WTC11 (cell line): ENCODE measurements at regions of chr11 and their contacts with region 1.

Region 1: GRCh38 chr11:125239585-125240560 is 75.3 kb downstream of the PKNOX2 start:
- DNase-seq: peak; percentile 57
- ATAC-seq: peak; percentile 71
- H3K4me3 Mint-ChIP-seq: peak overlapping the region; percentile 28
- H3K27ac Mint-ChIP-seq: 0 out of 2 replicates have a peak overlapping the region, but pooled peaks have one; percentile 5
- H3K4me1 Mint-ChIP-seq: peaks cover 43% of the 10 kb centered on the region
- H3K27me3 Mint-ChIP-seq: no peaks in the 10 kb centered on the region; the same call in 1 of the 2 replicates
- CTCF ChIP-seq: no peak

Region 2: DNA sequence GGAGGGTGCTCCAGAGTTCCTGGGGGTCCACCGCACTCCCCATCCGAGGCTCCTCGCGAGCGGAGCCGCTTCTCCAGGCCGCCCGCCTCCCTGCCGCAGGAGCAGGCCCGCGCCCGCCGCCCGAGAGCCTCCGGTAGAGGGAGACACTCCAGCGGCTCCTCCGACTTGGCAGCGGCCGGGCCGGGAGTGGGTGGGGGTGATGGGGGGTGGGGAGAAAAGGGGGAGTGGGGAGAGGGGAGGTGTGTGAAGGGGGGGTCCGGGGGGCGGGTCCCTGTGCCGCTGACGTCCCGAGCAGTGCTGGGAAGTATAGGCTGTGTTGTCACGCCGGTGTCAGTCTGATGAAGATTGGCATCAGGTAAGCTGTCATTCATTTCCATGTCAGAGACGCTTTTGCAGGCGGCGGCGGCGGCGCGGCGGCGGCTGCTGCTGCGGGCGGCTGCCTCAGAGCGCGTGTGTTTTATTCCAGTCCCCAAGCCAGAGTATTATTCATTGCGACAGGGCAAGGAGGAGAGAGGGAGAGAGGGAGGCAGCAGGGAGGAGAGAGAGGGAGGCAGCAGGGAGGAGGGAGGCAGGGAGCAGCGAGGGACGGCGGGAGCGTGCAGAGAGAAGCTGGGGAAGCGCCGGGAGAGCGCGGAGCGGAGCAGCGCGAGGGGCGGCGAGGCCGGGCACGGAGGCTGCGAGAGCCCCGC is 75.3 kb before region 1 on chr11 and contains the start of gene PKNOX2:
- CTCF ChIA-PET with region 1: interaction called, 10 read pairs
- POLR2A ChIA-PET with region 1: interaction called, 3 read pairs
- DNase-seq: peak; percentile 91
- ATAC-seq: peak; percentile 36
- H3K4me3 Mint-ChIP-seq: peak within 1 kb of the TSS; percentile 84
- H3K27ac Mint-ChIP-seq: peak within 1 kb of the TSS; percentile 95
- H3K4me1 Mint-ChIP-seq: peaks cover 69% of the 10 kb centered on the region
- H3K27me3 Mint-ChIP-seq: peaks cover 58% of the 10 kb centered on the region
- CTCF ChIP-seq: no peak
- total RNA-seq, gene PKNOX2: 1.9 to 3.7 TPM (median 2.3 TPM) in 3 replicates

Region 3: GRCh38 chr11:125224391-125225010 is 15.4 kb before region 1 on chr11:
- CTCF ChIA-PET with region 1: interaction called, 12 read pairs
- POLR2A ChIA-PET with region 1: no interaction called
- DNase-seq: peak; percentile 52
- ATAC-seq: peak; percentile 36
- H3K4me3 Mint-ChIP-seq: no peak overlapping the region
- H3K27ac Mint-ChIP-seq: peak overlapping the region; percentile 30; the same call in 1 of the 2 replicates
- H3K4me1 Mint-ChIP-seq: peaks cover 55% of the 10 kb centered on the region
- H3K27me3 Mint-ChIP-seq: peaks cover 6% of the 10 kb centered on the region; the same call in 1 of the 2 replicates
- CTCF ChIP-seq: no peak; the same call in 1 of the 2 replicates